ENCODE measurements at regions of chr10 and their contacts with region 1.

Region 1: GRCh38 chr10:70931168-70931815 is 42.9 kb upstream of the PCBD1 start:
- DNase-seq: no peak
- ATAC-seq: no peak
- H3K4me3 ChIP-seq: no peak overlapping the region
- H3K27ac ChIP-seq: no peak overlapping the region
- H3K4me1 ChIP-seq: peaks cover 0 to 13% (median 6%) of the 10 kb centered on the region in 9 donors
- H3K27me3 ChIP-seq: peaks cover 0 to 12% (median 0%) of the 10 kb centered on the region in 7 donors
- CTCF ChIP-seq: no peak

Region 2: GRCh38 chr10:71059054-71059818 is 127.9 kb after region 1 on chr10:
- intact Hi-C with region 1: loop called in 4 of 10 experiments (anchors 5 to 10 kb)
- DNase-seq: peak in 1 of 2 donors; percentile 48
- ATAC-seq: peak; percentile 25 to 68 (median 44)
- H3K4me3 ChIP-seq: no peak overlapping the region
- H3K27ac ChIP-seq: no peak overlapping the region
- H3K4me1 ChIP-seq: peaks cover 0 to 28% (median 11%) of the 10 kb centered on the region in 9 donors
- H3K27me3 ChIP-seq: no peaks in the 10 kb centered on the region
- CTCF ChIP-seq: no peak